Dorsolateral prefrontal cortex (tissue), 120 donors: ENCODE measurements at regions of chr12 and their contacts with region 1.

Region 1: DNA sequence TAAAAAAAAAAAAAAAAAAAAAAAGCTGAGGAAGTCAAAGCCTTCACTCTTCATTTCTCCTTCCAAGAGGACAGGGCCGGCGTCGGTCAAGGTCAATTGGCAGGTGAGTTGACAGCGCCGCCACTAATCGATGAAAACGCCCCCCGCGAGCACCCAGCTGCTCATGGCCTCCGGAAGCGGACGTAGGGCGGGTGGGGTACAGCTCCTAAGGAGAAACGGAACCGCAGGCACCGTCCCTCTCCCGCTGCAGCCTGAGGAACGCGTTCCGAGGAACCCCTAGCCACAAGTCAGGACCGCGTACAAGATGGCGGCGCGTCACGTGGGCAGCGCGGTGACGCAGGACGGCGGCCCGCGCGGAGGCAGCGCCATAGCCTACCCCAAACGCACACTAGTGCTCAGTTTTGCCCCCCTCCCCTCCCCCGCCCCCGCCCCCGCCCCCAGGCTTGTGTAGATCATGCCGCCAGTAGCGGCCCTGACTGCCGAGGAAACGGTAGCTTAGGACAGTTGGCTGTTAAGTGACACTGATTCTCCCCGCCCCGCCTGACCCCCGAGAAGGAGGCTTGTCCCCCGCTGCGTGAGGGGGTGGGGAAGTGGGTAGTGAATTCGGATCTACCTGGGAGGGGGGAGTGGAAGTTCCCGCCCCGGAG is at the start of gene ATF1:
- DNase-seq: peak; percentile 84 to 94 (median 90)
- H3K4me3 ChIP-seq: peak within 1 kb of the TSS; percentile 41 to 100 (median 95)
- H3K27ac ChIP-seq: peak within 1 kb of the TSS; percentile 87 to 99 (median 97)
- H3K27me3 ChIP-seq: no peaks in the 10 kb centered on the region
- CTCF ChIP-seq: peak in 35 of 56 donors; percentile 12 to 47 (median 27)
- total RNA-seq, gene ATF1: 11.9 to 34.8 (median 20.5) TPM

Region 2: GRCh38 chr12:50504798-50505385 is 258.9 kb before region 1 on chr12 and contains the start of gene DIP2B:
- intact Hi-C with region 1: loop called (anchors 2 to 10 kb)
- DNase-seq: peak; percentile 92 to 96 (median 94)
- H3K4me3 ChIP-seq: peak within 1 kb of the TSS; percentile 65 to 97 (median 90)
- H3K27ac ChIP-seq: peak within 1 kb of the TSS; percentile 89 to 100 (median 99)
- H3K27me3 ChIP-seq: no peaks in the 10 kb centered on the region
- CTCF ChIP-seq: peak; percentile 26 to 99 (median 97)
- total RNA-seq, gene DIP2B: 46.7 to 192 (median 81.6) TPM

Region 3: GRCh38 chr12:50992819-50993218 is 229.1 kb after region 1 on chr12:
- intact Hi-C with region 1: loop called (anchors 5 to 10 kb)
- DNase-seq: peak in 1 of 10 donors; percentile 15
- H3K4me3 ChIP-seq: no peak overlapping the region
- H3K27ac ChIP-seq: peak overlapping the region in 18 of 59 donors; percentile 4 to 59 (median 29)
- H3K27me3 ChIP-seq: no peaks in the 10 kb centered on the region
- CTCF ChIP-seq: no peak

Region 4: GRCh38 chr12:51025836-51026638 is 262.3 kb after region 1 on chr12 and contains the start of gene SLC11A2:
- intact Hi-C with region 1: loop called in 1 of 2 experiments (anchors 5 kb)
- DNase-seq: peak; percentile 95 to 98 (median 97)
- H3K4me3 ChIP-seq: peak within 1 kb of the TSS; percentile 61 to 97 (median 91)
- H3K27ac ChIP-seq: peak within 1 kb of the TSS; percentile 84 to 100 (median 99)
- H3K27me3 ChIP-seq: no peaks in the 10 kb centered on the region
- CTCF ChIP-seq: peak in 44 of 56 donors; percentile 14 to 64 (median 43)
- total RNA-seq, gene SLC11A2: 65.0 to 180 (median 103) TPM

Region 5: DNA sequence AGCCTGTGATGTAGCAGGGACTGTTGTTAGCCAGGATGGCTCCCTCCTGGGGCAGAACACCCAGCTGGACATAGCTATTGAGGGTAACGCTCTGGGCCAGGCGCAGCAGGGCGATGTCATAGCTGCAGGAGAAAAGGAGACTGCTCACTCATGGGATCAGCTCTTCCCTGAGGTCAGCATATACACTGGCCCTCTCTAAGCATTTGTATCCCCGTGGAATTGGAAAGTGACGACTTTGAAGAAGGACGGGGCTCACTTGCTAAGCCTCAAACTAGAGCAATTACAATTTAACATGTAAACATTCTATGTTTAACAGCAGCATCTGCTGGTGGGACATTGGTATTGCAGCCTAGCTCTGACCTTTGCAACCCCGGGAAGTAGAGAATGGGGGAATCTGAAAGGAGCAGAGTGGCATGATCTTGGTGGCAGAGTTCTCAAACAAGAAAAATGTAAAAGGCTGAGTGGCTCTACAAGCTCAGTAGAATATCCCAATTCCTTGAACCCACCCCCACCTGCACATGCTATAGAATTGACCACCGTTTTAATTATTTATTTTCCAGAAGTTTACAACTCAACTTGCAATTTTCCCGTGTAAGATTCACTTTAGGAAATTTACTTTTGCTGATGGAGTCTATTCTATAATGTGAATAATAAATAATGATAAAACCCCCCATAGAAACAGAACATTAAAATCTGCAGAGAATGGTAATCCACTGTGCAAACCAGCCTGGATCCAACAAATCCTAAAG is 577.7 kb after region 1 on chr12:
- intact Hi-C with region 1: loop called in 1 of 2 experiments (anchors 5 kb)
- DNase-seq: peak in 6 of 10 donors; percentile 50 to 80 (median 58)
- H3K4me3 ChIP-seq: peak overlapping the region in 55 of 59 donors; percentile 3 to 56 (median 39)
- H3K27ac ChIP-seq: peak overlapping the region in 25 of 59 donors; percentile 16 to 86 (median 60)
- H3K27me3 ChIP-seq: no peaks in the 10 kb centered on the region
- CTCF ChIP-seq: peak; percentile 91 to 99 (median 97)